BJ (cell line): ENCODE measurements at regions of chr14 and their contacts with region 1.

Region 1: DNA sequence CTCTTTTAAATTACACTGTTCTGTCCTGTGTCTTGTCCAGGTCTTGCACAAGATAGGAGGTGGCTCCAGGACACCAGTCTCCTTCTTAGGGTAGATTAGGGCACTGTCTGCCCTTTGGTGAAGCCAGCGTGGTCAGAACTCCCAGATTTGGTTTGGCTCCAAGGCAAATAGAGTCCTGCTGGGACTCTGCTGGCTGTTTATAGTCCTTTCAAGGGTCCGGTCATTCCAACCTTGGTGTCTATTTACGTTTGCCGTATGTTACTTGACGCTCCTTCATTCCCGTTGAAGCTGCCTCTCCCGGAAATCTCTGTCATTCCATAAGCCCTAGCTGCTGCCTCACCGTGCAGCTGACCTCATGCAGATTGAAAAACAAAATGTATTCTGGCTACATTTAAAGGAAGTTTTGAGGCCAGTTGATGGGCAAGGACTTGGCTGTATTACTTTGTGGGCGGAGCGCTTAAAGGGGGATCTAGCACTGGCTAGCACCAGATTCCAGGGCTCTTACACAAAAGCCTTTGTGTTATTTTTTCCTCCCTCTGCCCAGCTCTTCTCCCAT is 180.6 kb downstream of the AKAP6 start:
- DNase-seq: peak; percentile 88
- H3K4me3 ChIP-seq: no peak overlapping the region
- H3K27me3 ChIP-seq: no peaks in the 10 kb centered on the region
- CTCF ChIP-seq: no peak

Region 2: GRCh38 chr14:32377046-32377646 is 132.6 kb before region 1 on chr14:
- CTCF ChIA-PET with region 1: no interaction called
- POLR2A ChIA-PET with region 1: no interaction called
- DNase-seq: no peak
- H3K4me3 ChIP-seq: no peak overlapping the region
- H3K27me3 ChIP-seq: no peaks in the 10 kb centered on the region
- CTCF ChIP-seq: no peak

Region 3: DNA sequence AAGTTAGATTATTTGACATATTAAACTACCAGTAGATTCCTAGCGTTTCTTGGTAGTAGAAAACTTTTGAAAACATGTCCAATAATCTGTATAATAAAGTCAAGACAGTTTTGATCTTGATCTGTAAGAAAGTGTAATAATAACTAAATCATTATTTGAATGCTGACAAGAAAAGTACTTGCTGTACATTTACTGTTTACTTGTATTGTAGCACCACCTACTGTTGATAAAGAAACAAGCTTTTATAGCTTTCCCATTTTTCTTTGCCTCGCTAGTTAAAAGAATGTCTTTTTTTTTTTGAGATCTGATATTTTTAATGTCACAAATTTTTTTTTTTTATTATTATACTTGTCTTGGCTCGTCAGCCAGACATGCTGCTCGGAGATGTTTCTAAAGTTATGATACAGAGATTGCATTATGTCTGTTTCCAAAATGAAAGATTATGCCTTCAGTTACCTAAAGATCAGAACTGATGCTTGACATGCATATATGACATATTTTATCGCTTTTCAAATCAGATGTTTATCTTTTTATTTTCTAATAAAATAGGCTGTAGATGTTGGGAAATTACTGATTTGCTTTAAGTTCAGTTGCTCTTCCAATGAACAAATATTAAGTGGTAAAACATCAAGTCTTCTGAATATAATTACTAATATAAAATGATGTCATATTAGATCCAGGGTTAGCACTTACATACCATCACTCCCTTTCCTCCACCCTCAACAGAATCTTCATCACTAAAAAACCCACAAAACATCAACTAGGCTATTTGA is 40.1 kb before region 1 on chr14:
- CTCF ChIA-PET with region 1: interaction called, 26 read pairs
- POLR2A ChIA-PET with region 1: no interaction called
- DNase-seq: peak; percentile 47
- H3K4me3 ChIP-seq: no peak overlapping the region
- H3K27me3 ChIP-seq: no peaks in the 10 kb centered on the region
- CTCF ChIP-seq: peak; percentile 47

Region 4: DNA sequence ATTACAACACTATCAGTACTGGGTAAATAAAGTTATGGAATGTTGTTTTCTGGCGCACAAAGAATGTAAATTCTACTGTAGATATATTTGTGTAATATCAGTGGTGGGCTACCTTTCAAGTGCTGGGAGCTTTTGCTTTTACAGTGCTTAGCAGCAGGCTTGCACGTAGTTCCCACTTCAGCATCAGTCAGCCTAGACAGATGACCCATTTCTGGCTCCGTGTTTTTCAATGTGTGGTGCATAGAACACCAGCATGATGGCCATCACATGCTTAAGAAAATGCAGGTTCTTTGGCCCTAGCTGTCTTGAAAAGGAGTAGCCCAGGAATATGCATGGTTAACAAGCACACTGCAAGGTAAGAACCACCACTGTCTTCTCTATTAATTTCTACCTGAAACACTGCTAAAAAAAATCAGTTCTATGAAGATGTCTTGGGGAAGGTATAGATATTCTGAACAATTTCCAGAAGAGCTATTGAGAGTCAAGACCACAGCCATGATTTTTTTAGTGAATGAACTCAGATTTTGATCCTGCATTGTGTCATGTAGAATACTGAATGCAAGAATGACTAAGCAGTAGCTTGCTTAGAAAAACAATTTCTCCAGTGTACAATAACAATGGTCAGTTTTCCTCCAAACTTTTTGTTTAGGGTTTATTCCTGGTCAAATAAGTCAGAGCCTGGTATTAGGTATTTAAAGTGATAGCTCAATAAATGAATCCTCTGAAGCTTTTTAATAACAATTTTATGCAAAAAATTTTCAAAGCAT is 15.1 kb after region 1 on chr14:
- CTCF ChIA-PET with region 1: interaction called, 13 read pairs
- POLR2A ChIA-PET with region 1: no interaction called
- DNase-seq: no peak
- H3K4me3 ChIP-seq: no peak overlapping the region
- H3K27me3 ChIP-seq: no peaks in the 10 kb centered on the region
- CTCF ChIP-seq: no peak